Breast epithelium (tissue), 4 donors: ENCODE measurements at regions of chr6 and their contacts with region 1.

Region 1: GRCh38 chr6:66065313-66065712 is 358.3 kb upstream of the EYS start:
- DNase-seq: no peak
- H3K4me3 ChIP-seq: no peak overlapping the region
- H3K27ac ChIP-seq: no peak overlapping the region
- H3K4me1 ChIP-seq: no peaks in the 10 kb centered on the region
- H3K27me3 ChIP-seq: no peaks in the 10 kb centered on the region
- CTCF ChIP-seq: no peak
- POLR2A ChIP-seq: no peak

Region 2: DNA sequence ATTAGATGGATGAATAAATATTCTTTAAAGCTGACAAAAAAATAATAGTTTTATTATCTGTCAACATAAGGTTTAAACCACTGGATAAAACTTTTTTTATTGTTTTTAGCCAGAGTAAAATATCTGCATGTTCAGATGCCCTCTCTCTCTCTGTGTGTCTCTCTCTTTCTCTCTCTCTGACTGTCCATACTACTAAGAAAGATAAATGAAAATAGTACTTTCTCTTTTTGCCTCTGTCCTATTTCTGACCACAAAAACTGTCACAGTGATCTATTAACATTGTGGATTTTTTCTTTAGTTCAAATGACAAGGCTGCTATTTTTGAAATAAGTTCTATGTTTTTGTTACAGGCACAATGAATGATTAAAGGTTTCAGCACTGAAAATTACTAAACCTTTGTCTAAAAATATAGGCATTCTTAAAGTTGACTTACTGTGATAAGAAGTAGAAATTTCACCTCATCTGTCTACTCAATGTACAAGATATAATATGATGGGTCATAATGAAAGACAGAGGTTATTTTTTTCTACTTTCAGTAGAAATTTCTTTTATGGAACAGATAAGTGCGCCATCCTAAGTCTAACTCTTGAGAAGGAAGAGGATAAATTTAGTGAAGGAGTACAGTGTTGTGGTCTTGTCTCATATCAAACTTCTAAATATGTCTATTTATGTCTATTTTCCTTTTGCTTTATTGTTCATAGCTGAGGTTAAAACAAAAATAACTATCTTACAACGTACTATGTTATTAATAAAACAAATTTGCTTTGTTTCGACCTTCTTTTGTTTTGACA is 16.4 kb before region 1 on chr6:
- intact Hi-C with region 1: loop called (anchors 1 kb)
- DNase-seq: no peak
- H3K4me3 ChIP-seq: no peak overlapping the region
- H3K27ac ChIP-seq: no peak overlapping the region
- H3K4me1 ChIP-seq: no peaks in the 10 kb centered on the region
- H3K27me3 ChIP-seq: no peaks in the 10 kb centered on the region
- CTCF ChIP-seq: no peak
- POLR2A ChIP-seq: no peak

Region 3: DNA sequence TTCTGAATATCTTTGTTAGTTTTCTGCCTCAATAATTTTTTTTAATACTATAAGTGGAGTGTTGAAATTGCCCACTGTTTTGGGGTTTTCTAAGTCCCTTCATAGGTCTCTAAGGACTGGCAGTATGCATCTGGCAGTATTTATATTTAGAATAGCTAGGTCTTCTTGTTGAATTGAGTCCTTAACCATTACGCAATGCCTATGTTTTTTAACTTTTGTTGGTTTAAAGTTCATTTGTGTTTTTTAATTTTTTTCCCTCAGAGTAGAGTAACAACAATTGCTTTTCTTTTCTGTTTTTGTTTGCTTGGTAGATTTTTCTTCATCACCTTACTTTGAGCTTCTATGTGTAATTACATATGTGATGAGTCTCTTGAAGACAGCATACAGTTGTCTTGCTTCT is 17.6 kb after region 1 on chr6:
- intact Hi-C with region 1: no loop called
- DNase-seq: no peak
- H3K4me3 ChIP-seq: no peak overlapping the region
- H3K27ac ChIP-seq: no peak overlapping the region
- H3K4me1 ChIP-seq: no peaks in the 10 kb centered on the region
- H3K27me3 ChIP-seq: no peaks in the 10 kb centered on the region
- CTCF ChIP-seq: no peak
- POLR2A ChIP-seq: no peak